Naive thymus-derived CD8-positive, alpha-beta T cell (primary cell): ENCODE measurements at regions of chr16 and their contacts with region 1.

Region 1: GRCh38 chr16:88759245-88759975 is 25.6 kb downstream of the PIEZO1 start:
- DNase-seq: peak in 1 of 10 donors; percentile 35
- ATAC-seq: peak; percentile 85 to 87
- H3K4me3 Mint-ChIP-seq: peak overlapping the region in 5 of 10 donors; percentile 43 to 79 (median 55)
- H3K27ac Mint-ChIP-seq: peak overlapping the region in 8 of 10 donors; percentile 20 to 87 (median 68)
- H3K4me1 Mint-ChIP-seq: peaks cover 7 to 29% (median 18%) of the 10 kb centered on the region in 4 donors
- H3K27me3 Mint-ChIP-seq: no peaks in the 10 kb centered on the region

Region 2: DNA sequence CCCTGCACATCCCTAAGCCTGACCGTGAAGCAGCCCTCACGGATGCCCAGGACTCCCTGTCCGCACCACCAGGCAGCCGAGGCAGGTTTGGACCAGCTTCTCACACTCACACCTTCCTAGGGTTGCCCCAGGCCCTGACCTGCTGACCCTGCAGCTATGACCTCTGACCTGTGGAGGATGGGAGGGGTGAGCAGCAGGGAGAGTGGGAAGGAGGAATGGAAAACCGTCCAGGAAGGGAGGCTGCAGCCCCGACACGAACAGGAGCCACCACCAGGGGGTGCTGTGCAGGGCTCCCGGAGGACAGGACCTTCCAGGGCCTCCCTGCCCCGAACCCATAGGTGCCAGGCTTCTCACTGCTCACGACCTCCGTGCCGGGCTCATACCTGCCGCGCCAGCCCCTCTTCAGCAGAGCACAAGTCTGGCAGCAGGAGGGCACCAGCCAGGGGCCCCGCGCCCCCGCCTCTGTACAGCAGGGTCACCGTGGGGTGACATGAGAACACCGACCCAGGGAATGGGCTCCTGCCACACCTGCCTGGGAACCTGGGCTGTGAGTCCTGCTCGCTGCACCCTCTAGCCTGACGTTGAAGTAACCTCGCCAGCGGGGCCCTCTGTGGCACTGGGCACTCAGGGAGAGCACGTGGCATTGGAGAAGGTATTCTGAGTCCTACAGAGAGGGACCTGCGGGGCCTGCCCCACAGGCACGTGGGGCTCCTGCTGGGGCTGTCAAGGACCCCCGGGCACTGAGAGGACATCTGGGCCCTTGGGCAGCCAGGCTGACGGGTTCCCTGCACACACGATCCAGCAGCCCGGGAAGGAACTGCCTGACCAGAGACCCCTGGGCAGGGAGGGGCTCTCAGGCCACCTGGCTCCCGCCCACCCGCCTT is 15.5 kb before region 1 on chr16:
- POLR2A ChIA-PET with region 1: interaction called, 15 read pairs
- DNase-seq: peak; percentile 52 to 86 (median 72)
- ATAC-seq: peak; percentile 46 to 61
- H3K4me3 Mint-ChIP-seq: peak overlapping the region in 5 of 10 donors; percentile 10 to 62 (median 34)
- H3K27ac Mint-ChIP-seq: peak overlapping the region in 4 of 10 donors; percentile 11 to 59 (median 20)
- H3K4me1 Mint-ChIP-seq: peaks cover 10 to 38% (median 32%) of the 10 kb centered on the region in 4 donors
- H3K27me3 Mint-ChIP-seq: no peaks in the 10 kb centered on the region

Region 3: DNA sequence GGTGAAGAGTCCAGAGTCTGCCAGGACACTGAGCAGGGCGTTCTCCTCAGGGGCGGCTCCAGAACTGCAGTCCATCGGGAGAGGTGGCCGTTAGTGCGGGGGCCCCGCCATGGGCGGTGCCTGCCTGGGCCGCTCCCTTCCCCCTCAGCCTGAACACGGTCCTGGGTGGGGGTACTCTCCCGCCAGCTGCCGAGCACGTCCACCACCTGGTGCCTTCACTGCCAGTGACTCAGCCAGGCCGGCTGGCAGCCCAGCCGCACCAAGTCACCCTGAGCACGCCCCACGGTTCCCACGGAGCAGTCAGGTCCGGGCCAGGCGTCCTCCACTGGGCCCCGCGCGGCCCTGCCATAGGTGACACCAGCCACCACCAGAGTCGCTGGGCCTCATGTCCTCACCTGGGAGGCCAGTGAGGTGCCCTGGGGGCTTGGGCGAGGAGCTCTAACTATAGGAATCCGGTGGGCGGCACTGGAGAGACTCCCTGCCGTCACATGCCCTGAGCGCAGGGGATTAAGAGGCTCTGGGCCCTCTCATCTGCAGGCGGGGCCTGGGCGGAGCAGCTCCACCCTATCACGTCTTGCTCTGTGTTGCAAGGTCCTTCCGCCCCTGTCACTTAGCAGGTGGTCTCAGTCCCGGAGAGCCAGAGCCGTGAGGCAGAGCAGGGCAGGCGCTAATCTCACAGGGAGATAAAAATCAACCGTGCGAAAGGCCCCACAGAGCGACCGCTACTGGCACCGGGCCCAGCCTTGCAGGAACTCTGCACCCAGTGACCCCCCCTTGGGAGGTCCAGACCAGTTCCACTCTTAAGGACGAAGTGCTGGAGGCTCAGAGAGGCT is 11.3 kb after region 1 on chr16:
- POLR2A ChIA-PET with region 1: interaction called, 12 read pairs
- DNase-seq: peak; percentile 35 to 77 (median 48)
- ATAC-seq: peak; percentile 95
- H3K4me3 Mint-ChIP-seq: peak overlapping the region; percentile 36 to 68 (median 58)
- H3K27ac Mint-ChIP-seq: peak overlapping the region; percentile 66 to 91 (median 84)
- H3K4me1 Mint-ChIP-seq: peaks cover 8 to 39% (median 35%) of the 10 kb centered on the region in 4 donors
- H3K27me3 Mint-ChIP-seq: no peaks in the 10 kb centered on the region